ENCODE measurements at regions of chr16 and their contacts with region 1.

Region 1: DNA sequence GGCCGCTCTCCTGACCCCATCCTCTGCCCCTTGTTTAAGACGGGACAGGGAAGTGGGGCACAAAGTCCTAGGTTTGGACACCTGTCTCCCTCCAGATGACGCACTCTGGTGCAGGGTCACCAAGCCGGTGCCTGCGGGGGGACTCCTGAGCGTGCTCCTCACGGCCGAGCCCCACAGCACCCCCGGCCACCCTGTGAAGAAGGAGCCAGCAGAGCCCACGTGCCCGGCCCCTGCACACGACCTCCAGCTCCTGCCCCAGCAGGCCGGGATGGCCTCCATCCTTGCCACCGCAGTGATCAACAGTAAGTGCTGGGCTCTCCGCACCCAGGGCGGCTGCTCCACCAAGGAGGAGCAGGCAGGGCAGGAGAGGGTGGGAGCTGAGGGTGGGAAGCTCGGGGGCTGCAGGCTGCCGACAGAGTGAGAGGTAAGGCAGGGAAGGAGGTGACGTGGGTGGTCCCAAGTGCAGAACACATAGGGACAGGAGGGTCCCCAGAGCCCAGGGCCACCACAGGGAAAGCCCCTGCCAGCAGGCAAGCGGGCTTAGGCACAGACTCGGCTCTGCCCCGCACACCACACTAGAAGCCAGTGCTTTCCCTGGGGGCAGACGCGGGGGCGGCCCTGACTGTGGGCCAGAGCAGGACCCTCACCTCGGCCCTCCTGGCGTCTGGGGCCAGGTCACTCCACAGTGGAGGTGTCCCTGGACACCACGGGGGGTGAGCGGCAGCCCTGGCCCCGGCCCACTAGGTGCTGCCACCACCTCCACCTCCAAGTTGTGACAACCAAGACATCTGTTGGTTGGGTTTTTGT is 42.1 kb upstream of the ZC3H18 start:
- DNase-seq: no peak
- ATAC-seq: no peak

Region 2: DNA sequence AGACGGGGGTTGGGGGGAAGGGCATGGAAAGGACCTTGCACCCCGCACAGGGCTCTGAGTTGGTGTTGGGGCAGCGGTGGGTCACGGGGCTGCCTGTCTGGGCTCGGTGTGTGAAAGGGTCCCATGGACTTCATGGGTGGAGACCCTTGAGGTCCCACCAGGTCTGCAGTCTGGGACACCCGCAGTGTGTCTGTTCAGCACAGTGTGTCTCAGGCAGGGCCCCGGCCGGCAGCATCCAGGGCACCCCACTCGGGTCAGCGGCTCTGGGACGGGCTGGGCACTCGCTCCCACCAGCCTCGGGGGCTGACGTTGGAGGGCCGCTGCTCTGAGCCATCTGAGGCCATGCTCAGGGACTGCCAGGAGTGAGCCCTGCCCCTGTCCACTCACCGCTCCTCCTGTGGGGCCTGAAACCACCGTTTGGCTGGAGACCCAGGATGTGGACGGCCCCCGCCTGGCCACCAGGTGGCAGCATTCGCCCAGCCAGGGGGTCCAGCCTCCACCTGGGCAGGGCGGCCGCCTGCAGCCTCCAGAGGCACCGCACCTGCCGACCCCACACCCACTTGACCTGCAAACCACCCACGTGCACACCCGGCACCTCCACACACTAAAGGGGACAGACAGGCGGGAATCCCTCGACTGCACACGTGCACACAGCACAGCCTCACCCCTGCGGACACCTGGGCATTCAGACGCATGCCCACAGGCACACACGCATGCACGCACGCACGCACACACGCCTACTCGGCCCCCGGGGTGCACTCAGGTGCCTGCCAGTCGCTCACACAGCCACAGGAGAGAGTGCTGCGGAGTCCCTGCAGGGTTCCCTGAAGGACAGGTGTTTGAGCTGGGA is 85.2 kb before region 1 on chr16:
- intact Hi-C with region 1: loop called (anchors 2 kb)
- DNase-seq: peak; percentile 84
- ATAC-seq: peak; percentile 89

Region 3: GRCh38 chr16:88497561-88498462 is 30.3 kb before region 1 on chr16:
- intact Hi-C with region 1: no loop called
- DNase-seq: no peak
- ATAC-seq: no peak

Region 4: GRCh38 chr16:88662843-88663606 is 134.9 kb after region 1 on chr16 and contains the start of gene MVD:
- intact Hi-C with region 1: no loop called
- DNase-seq: peak; percentile 98
- ATAC-seq: peak; percentile 100
- total RNA-seq, gene MVD: 64.4 TPM

Measured in sciatic nerve (tissue), 2 donors.